T-cell (primary cell): ENCODE measurements at regions of chr2 and their contacts with region 1.

Region 1: GRCh38 chr2:24779116-24779515 is 14.1 kb downstream of the PTRHD1 start:
- DNase-seq: no peak
- ATAC-seq: no peak
- H3K4me3 ChIP-seq: no peak overlapping the region
- H3K4me3 Mint-ChIP-seq: no peak overlapping the region
- H3K27ac ChIP-seq: no peak overlapping the region
- H3K27ac Mint-ChIP-seq: no peak overlapping the region
- H3K4me1 ChIP-seq: no peaks in the 10 kb centered on the region
- H3K4me1 Mint-ChIP-seq: no peaks in the 10 kb centered on the region
- H3K27me3 ChIP-seq: peaks cover 0 to 2% of the 10 kb centered on the region in 2 experiments
- H3K27me3 Mint-ChIP-seq: peaks cover 4 to 6% of the 10 kb centered on the region in 2 donors

Region 2: DNA sequence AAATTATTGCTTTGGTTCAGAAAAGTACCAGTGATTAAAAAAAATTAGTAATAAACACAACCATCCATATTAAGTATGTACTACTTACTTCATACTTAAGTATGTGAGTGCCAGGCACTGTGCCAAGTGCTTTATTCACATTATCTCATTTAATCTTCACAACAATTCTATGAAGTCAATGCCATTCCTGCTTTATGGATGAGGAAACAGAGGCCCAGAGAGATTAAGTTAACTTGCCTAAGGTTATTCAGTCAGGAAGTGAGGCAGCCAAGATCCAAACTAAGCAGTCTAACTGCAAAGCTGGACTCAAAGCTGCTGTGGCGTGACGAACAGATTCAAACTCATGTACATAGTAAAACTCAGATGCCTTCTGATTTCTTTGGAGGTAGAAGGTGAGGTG is 872.0 kb after region 1 on chr2:
- CTCF ChIA-PET with region 1: no interaction called
- POLR2A ChIA-PET with region 1: interaction called in 1 of 2 experiments, 11 read pairs
- DNase-seq: no peak
- ATAC-seq: no peak
- H3K4me3 ChIP-seq: no peak overlapping the region
- H3K4me3 Mint-ChIP-seq: no peak overlapping the region
- H3K27ac ChIP-seq: no peak overlapping the region
- H3K27ac Mint-ChIP-seq: no peak overlapping the region
- H3K4me1 ChIP-seq: no peaks in the 10 kb centered on the region
- H3K4me1 Mint-ChIP-seq: peaks cover 3 to 4% (median 3%) of the 10 kb centered on the region in 3 donors
- H3K27me3 ChIP-seq: no peaks in the 10 kb centered on the region
- H3K27me3 Mint-ChIP-seq: no peaks in the 10 kb centered on the region

Region 3: DNA sequence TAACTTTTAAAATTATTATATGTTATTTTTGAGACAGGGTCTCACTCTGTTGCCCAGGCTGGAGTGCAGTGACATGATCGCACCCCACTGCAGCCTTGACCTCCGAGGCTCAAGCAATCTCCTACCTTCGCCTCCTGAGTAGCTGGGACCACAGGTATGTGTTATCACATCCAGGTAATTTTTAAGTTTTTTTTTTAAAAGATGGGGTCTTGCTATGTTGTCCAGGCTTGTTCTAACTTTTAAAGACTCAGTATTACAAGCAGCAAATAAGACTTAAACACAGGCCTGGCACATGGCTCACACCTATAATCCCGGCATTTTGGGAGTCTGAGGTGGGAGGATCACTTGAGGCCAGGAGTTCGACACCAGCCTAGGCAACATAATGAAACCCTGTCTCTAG is 998.0 kb after region 1 on chr2:
- CTCF ChIA-PET with region 1: no interaction called
- POLR2A ChIA-PET with region 1: no interaction called
- DNase-seq: no peak
- ATAC-seq: no peak
- H3K4me3 ChIP-seq: no peak overlapping the region
- H3K4me3 Mint-ChIP-seq: no peak overlapping the region
- H3K27ac ChIP-seq: no peak overlapping the region
- H3K27ac Mint-ChIP-seq: no peak overlapping the region
- H3K4me1 ChIP-seq: no peaks in the 10 kb centered on the region
- H3K4me1 Mint-ChIP-seq: peaks cover 0 to 6% (median 3%) of the 10 kb centered on the region in 3 donors
- H3K27me3 ChIP-seq: no peaks in the 10 kb centered on the region
- H3K27me3 Mint-ChIP-seq: no peaks in the 10 kb centered on the region